ENCODE measurements at regions of chr20 and their contacts with region 1.

Region 1: DNA sequence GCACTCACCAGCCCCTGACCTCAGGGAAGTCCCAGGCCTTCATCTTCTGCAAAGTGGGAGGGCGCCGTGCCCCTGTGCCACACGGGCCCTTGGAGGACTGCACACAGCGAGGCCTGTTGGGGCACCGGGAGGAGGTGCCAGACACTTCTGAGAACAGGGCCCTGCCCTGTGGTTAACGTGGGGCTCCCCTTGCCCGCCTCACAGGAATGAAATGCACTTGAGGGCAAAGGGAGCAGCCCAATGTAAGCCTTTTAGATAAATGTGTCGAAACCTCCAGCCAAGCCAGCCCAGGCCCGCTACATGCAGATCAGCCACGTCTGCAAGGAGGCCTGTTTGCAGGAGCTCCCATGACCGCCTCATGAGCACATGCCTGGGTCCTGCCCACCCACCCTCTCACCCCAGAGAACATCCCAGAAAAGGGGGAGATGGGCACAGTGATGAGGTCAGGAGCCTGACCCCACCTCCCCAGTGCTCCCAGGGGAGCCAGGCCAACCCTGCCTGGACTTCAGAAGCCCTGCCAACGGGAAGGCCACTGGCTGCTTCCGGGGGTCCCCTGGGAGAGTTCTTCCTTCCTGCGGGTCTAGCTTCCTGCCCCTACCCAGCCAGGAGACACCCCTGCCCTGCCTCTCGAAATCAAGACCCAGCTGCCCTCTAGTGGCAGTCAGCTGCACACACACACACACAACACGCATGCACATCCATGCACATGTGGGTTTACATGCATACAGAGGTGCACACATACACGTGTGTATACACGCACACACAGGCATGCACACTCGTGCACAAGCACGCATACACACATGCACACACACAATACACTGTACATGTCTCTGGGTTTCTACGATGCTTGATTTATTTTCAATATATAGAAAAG is 178.7 kb downstream of the TAF4 start:
- DNase-seq: peak; percentile 23
- ATAC-seq: peak; percentile 91
- H3K4me3 ChIP-seq: no peak overlapping the region
- H3K27ac ChIP-seq: no peak overlapping the region
- H3K4me1 ChIP-seq: no peaks in the 10 kb centered on the region
- H3K27me3 ChIP-seq: peaks cover 6% of the 10 kb centered on the region; the same call in 1 of the 2 replicates
- CTCF ChIP-seq: peak; percentile 44 to 91 (median 89); a peak in 5 of 6 replicates
- POLR2A ChIP-seq: no peak
- RAD21 ChIP-seq: peak; percentile 66

Region 2: DNA sequence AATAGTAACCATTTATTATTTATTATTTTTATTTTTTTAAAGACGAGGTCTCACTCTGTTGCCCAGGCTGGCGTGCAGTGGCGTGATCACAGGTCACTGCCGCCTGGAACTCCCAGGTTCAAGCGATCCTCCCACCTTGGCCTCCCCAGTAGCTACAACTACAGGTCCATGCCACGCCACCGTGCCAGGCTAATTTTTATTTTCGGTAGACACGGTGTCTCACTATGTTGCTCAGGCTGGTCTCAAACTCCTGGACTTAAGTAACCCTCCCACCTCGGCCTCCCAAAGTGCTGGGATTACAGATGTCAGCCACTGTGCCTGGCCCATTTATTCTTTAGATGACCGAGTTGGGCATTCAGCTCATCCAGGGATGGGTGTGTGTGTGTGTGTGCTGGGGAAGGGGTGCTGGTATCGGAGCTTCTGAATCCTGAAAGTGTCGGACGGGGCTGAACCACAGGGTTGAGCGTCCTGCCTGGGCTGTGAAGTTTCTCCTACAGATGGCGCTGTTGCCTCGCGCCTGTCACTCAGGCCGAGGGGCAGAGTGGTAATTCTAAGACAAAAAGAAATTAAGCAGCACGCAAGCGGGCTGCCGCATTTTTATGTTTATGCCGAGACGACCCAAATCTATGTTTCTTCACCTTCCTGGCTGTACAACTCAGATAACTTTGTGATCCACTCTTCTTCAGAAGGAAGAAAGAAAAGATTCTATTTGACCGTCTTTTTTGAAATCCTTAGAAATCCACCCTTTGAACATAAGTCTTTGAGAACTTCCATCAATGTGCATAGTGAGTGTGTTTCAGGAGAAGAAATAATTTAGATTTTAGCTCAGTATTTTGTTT is 1676.0 kb before region 1 on chr20:
- CTCF ChIA-PET with region 1: no interaction called
- POLR2A ChIA-PET with region 1: no interaction called
- RAD21 ChIA-PET with region 1: no interaction called
- intact Hi-C with region 1: loop called (anchors 1 kb)
- DNase-seq: peak; percentile 23
- ATAC-seq: peak; percentile 94
- H3K4me3 ChIP-seq: no peak overlapping the region
- H3K27ac ChIP-seq: no peak overlapping the region
- H3K4me1 ChIP-seq: no peaks in the 10 kb centered on the region
- H3K27me3 ChIP-seq: peaks cover 3% of the 10 kb centered on the region; the same call in 1 of the 2 replicates
- CTCF ChIP-seq: peak; percentile 34 to 83 (median 80); a peak in 5 of 6 replicates
- POLR2A ChIP-seq: no peak
- RAD21 ChIP-seq: peak; percentile 65

Measured in HCT116 (cell line).